Left colon (tissue), 2 donors: ENCODE measurements at regions of chr6 and their contacts with region 1.

Region 1: GRCh38 chr6:1396952-1397868 is 7.8 kb downstream of the FOXF2 start:
- DNase-seq: peak; percentile 52 to 74
- ATAC-seq: peak; percentile 71

Region 2: GRCh38 chr6:599576-600448 is 797.4 kb before region 1 on chr6:
- intact Hi-C with region 1: loop called in 1 of 2 experiments (anchors 5 kb)
- DNase-seq: no peak
- ATAC-seq: no peak

Region 3: GRCh38 chr6:1624851-1625781 is 227.9 kb after region 1 on chr6:
- intact Hi-C with region 1: no loop called
- DNase-seq: peak in 1 of 2 donors; percentile 19
- ATAC-seq: peak; percentile 24